ENCODE measurements at regions of chr5 and their contacts with region 1.

Region 1: DNA sequence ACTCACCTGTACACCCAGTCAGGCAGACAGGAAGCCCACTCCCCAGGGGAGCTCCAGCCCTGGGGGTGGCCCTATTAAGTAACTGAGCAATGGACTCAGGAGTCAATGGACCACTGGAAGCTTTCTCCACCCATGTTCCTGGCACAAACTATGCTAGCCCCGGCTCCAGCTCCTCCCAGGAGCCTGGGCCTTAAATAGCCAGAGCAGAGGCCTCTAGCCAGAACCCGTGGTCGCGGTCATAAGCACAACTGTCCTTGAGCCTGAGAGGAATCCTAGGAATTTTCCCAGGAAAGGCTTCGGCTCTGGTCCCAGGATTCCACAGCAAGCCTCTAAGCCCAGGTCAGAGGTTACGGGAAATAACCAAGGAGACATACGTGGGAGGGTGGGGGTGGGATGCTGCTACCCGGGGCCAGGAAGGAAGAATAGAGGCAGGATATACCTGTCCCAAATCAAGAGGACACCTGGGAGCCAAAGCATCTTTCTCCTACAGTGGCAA is 5.5 kb downstream of the SEPTIN8 start:
- DNase-seq: peak; percentile 67
- H3K4me3 ChIP-seq: no peak overlapping the region
- CTCF ChIP-seq: no peak

Region 2: DNA sequence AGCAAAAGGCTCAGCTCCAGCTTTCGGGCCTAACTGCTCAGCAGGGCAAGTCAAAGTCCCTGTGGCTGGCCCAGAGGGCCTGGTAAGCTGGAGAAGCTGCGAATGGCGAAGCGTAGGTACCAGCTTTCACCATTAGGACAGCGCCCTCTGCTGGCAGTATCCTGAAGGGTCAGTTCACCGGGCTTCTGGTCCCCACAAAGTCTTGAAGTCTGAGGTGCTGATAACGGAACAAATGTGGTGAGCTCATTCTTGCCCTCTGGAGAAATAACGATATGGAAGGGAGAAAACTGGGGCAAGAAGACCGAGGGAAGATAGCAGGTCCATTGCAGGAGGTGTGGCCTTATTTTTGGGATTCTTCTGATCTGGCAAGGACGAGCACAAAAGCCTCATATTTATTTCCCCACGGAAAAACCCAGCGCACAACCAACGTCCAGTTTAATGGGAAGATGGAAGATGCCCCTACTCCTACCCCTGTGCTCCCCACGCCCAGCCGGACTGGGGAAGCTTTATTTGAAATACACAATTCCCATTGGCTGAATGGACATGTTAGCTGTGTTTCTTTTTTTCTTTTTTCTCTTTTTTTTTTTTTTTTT is 48.7 kb after region 1 on chr5:
- in situ Hi-C with region 1: loop called (anchors 5 kb)
- DNase-seq: peak; percentile 85
- H3K4me3 ChIP-seq: no peak overlapping the region
- CTCF ChIP-seq: peak; percentile 84

Measured in astrocyte of the cerebellum (primary cell).